ENCODE measurements at regions of chr11 and their contacts with region 1.

Region 1: GRCh38 chr11:1572197-1573076 is at the start of gene DUSP8:
- DNase-seq: peak; percentile 97
- H3K4me3 Mint-ChIP-seq: peak within 1 kb of the TSS; percentile 15
- H3K27ac Mint-ChIP-seq: no peak within 1 kb of the TSS
- H3K4me1 Mint-ChIP-seq: peaks cover 4% of the 10 kb centered on the region
- H3K27me3 Mint-ChIP-seq: peaks cover 37% of the 10 kb centered on the region
- total RNA-seq, gene DUSP8: 0.86 and 1.6 TPM in 2 replicates

Region 2: GRCh38 chr11:1202776-1203504 is 369.5 kb before region 1 on chr11:
- intact Hi-C with region 1: loop called (anchors 1 kb)
- DNase-seq: peak; percentile 90
- H3K4me3 Mint-ChIP-seq: no peak overlapping the region
- H3K27ac Mint-ChIP-seq: no peak overlapping the region
- H3K4me1 Mint-ChIP-seq: no peaks in the 10 kb centered on the region
- H3K27me3 Mint-ChIP-seq: no peaks in the 10 kb centered on the region

Region 3: GRCh38 chr11:1389103-1389931 is 183.1 kb before region 1 on chr11:
- intact Hi-C with region 1: loop called (anchors 10 kb)
- DNase-seq: peak; percentile 98
- H3K4me3 Mint-ChIP-seq: peak overlapping the region; percentile 59
- H3K27ac Mint-ChIP-seq: no peak overlapping the region
- H3K4me1 Mint-ChIP-seq: peaks cover 10% of the 10 kb centered on the region
- H3K27me3 Mint-ChIP-seq: peaks cover 42% of the 10 kb centered on the region

Region 4: GRCh38 chr11:1546536-1547400 is 25.7 kb before region 1 on chr11:
- intact Hi-C with region 1: loop called (anchors 2 kb)
- DNase-seq: peak; percentile 79
- H3K4me3 Mint-ChIP-seq: no peak overlapping the region
- H3K27ac Mint-ChIP-seq: no peak overlapping the region
- H3K4me1 Mint-ChIP-seq: no peaks in the 10 kb centered on the region
- H3K27me3 Mint-ChIP-seq: peaks cover 41% of the 10 kb centered on the region

Measured in activated CD4-positive, alpha-beta T cell treated with anti-CD3 and anti-CD28 coated beads, Interleukin-2, amount 10 ng/mL, durations not matched to agents 24 days and 14 days (primary cell).